Natural killer cell (primary cell): ENCODE measurements at regions of chr9 and their contacts with region 1.

Region 1: GRCh38 chr9:99819856-99820684 is 1.6 kb upstream of the NR4A3 start:
- DNase-seq: peak; percentile 93 to 98
- ATAC-seq: peak; percentile 48 to 82 (median 58)
- H3K4me3 ChIP-seq: peak overlapping the region; percentile 79
- H3K4me3 Mint-ChIP-seq: peak overlapping the region; percentile 99
- H3K27ac ChIP-seq: peak overlapping the region; percentile 94
- H3K27ac Mint-ChIP-seq: peak overlapping the region; percentile 96 to 99
- H3K4me1 ChIP-seq: peaks cover 51% of the 10 kb centered on the region
- H3K4me1 Mint-ChIP-seq: peaks cover 55 to 62% of the 10 kb centered on the region in 2 donors
- H3K27me3 ChIP-seq: peaks cover 17% of the 10 kb centered on the region
- H3K27me3 Mint-ChIP-seq: peaks cover 21 to 26% of the 10 kb centered on the region in 2 donors
- CTCF ChIP-seq: no peak

Region 2: GRCh38 chr9:99057665-99058625 is 762.1 kb before region 1 on chr9:
- intact Hi-C with region 1: loop called (anchors 10 kb)
- DNase-seq: peak; percentile 81 to 89
- ATAC-seq: peak; percentile 47 to 78 (median 77)
- H3K4me3 ChIP-seq: peak overlapping the region; percentile 22
- H3K4me3 Mint-ChIP-seq: peak overlapping the region; percentile 96
- H3K27ac ChIP-seq: peak overlapping the region; percentile 82
- H3K27ac Mint-ChIP-seq: peak overlapping the region; percentile 93 to 97
- H3K4me1 ChIP-seq: peaks cover 71% of the 10 kb centered on the region
- H3K4me1 Mint-ChIP-seq: peaks cover 88 to 91% of the 10 kb centered on the region in 2 donors
- H3K27me3 ChIP-seq: no peaks in the 10 kb centered on the region
- H3K27me3 Mint-ChIP-seq: no peaks in the 10 kb centered on the region
- CTCF ChIP-seq: no peak

Region 3: DNA sequence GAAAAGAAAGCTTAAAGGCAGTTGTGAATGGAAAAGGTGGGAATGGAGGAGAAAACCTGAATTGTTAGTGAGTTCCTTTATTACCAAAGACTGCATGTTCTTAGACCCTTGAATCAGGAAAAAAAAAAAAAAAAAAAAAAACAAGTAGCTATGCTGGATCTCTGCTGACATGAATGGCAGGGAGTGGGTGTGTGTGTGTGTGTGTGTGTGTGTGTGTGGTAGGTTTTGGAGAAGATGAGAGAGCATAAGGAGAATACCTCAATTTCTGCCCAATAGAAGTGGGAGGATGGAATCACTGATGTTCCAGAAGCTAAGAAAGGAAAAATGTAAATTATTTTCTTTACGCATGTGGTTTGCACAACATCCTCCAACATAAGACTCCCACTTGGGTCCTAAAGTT is 23.8 kb before region 1 on chr9:
- intact Hi-C with region 1: no loop called
- DNase-seq: no peak
- ATAC-seq: no peak
- H3K4me3 ChIP-seq: no peak overlapping the region
- H3K4me3 Mint-ChIP-seq: no peak overlapping the region
- H3K27ac ChIP-seq: no peak overlapping the region
- H3K27ac Mint-ChIP-seq: no peak overlapping the region
- H3K4me1 ChIP-seq: no peaks in the 10 kb centered on the region
- H3K4me1 Mint-ChIP-seq: no peaks in the 10 kb centered on the region
- H3K27me3 ChIP-seq: no peaks in the 10 kb centered on the region
- H3K27me3 Mint-ChIP-seq: peaks cover 5 to 33% of the 10 kb centered on the region in 2 donors
- CTCF ChIP-seq: no peak

Region 4: DNA sequence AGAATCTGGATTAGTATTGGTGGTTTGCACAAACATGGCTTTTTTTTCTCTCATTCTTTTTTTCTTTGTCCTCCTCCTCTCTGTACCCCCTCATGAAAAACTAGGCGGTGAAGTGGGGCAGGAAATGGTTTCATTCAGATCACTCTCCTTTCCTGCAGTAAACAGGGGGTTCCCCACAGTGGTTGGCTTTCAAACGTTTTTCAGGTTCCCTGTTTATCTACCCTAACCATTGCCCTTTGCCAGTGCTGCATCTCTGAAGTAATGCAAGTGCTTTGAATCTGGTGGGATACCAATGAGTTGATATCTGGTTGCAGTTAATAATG is 31.4 kb after region 1 on chr9:
- intact Hi-C with region 1: loop called (anchors 2 kb)
- DNase-seq: peak in 1 of 2 donors; percentile 80
- ATAC-seq: peak; percentile 85 to 92 (median 87)
- H3K4me3 ChIP-seq: no peak overlapping the region
- H3K4me3 Mint-ChIP-seq: peak overlapping the region; percentile 84
- H3K27ac ChIP-seq: peak overlapping the region; percentile 66
- H3K27ac Mint-ChIP-seq: peak overlapping the region; percentile 88 to 92
- H3K4me1 ChIP-seq: peaks cover 32% of the 10 kb centered on the region
- H3K4me1 Mint-ChIP-seq: peaks cover 36% of the 10 kb centered on the region in 2 donors
- H3K27me3 ChIP-seq: no peaks in the 10 kb centered on the region
- H3K27me3 Mint-ChIP-seq: no peaks in the 10 kb centered on the region
- CTCF ChIP-seq: no peak

Region 5: DNA sequence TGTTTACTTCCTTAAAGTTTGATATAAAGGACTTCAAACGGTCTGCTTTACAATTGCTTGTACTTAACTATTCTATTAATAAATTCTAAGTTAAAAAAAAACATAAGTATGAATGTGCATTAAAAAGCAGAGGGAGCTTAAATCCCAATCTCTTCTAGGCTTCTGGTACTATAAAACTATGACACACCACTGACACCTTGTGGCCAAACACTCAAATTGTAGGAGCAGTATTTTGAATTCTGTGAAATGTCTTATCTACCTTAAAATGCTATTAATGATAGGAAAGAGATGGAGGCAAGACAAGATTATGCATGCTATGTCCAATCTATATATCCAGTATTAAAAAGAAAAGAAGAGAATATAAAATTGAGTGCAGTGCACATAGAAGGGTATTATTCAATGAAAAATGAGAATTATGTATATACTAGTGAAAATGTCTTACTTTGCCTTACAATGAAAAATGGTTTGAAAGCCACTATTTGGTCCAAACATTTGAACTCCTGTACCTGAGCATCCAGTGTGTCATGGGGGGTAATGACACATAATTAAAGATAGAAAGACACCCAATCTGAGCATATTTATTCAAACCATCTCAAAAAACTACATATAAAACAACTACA is 191.1 kb after region 1 on chr9:
- intact Hi-C with region 1: loop called (anchors 5 kb)
- DNase-seq: peak in 1 of 2 donors; percentile 78
- ATAC-seq: peak; percentile 67 to 75 (median 73)
- H3K4me3 ChIP-seq: no peak overlapping the region
- H3K4me3 Mint-ChIP-seq: no peak overlapping the region
- H3K27ac ChIP-seq: no peak overlapping the region
- H3K27ac Mint-ChIP-seq: no peak overlapping the region
- H3K4me1 ChIP-seq: no peaks in the 10 kb centered on the region
- H3K4me1 Mint-ChIP-seq: no peaks in the 10 kb centered on the region
- H3K27me3 ChIP-seq: no peaks in the 10 kb centered on the region
- H3K27me3 Mint-ChIP-seq: no peaks in the 10 kb centered on the region
- CTCF ChIP-seq: peak; percentile 91

Region 6: GRCh38 chr9:100216178-100216787 is 396.2 kb after region 1 on chr9:
- intact Hi-C with region 1: loop called (anchors 10 kb)
- DNase-seq: peak; percentile 36 to 80
- ATAC-seq: peak; percentile 76 to 85 (median 78)
- H3K4me3 ChIP-seq: no peak overlapping the region
- H3K4me3 Mint-ChIP-seq: no peak overlapping the region
- H3K27ac ChIP-seq: no peak overlapping the region
- H3K27ac Mint-ChIP-seq: no peak overlapping the region
- H3K4me1 ChIP-seq: no peaks in the 10 kb centered on the region
- H3K4me1 Mint-ChIP-seq: no peaks in the 10 kb centered on the region
- H3K27me3 ChIP-seq: no peaks in the 10 kb centered on the region
- H3K27me3 Mint-ChIP-seq: no peaks in the 10 kb centered on the region
- CTCF ChIP-seq: peak; percentile 63

Region 7: GRCh38 chr9:101566904-101567724 is 1747.0 kb after region 1 on chr9:
- intact Hi-C with region 1: no loop called
- DNase-seq: peak in 1 of 2 donors; percentile 63
- ATAC-seq: no peak
- H3K4me3 ChIP-seq: no peak overlapping the region
- H3K4me3 Mint-ChIP-seq: no peak overlapping the region
- H3K27ac ChIP-seq: no peak overlapping the region
- H3K27ac Mint-ChIP-seq: no peak overlapping the region
- H3K4me1 ChIP-seq: no peaks in the 10 kb centered on the region
- H3K4me1 Mint-ChIP-seq: peaks cover 3 to 7% of the 10 kb centered on the region in 2 donors
- H3K27me3 ChIP-seq: no peaks in the 10 kb centered on the region
- H3K27me3 Mint-ChIP-seq: no peaks in the 10 kb centered on the region
- CTCF ChIP-seq: no peak